ENCODE measurements at regions of chr18 and their contacts with region 1.

Region 1: DNA sequence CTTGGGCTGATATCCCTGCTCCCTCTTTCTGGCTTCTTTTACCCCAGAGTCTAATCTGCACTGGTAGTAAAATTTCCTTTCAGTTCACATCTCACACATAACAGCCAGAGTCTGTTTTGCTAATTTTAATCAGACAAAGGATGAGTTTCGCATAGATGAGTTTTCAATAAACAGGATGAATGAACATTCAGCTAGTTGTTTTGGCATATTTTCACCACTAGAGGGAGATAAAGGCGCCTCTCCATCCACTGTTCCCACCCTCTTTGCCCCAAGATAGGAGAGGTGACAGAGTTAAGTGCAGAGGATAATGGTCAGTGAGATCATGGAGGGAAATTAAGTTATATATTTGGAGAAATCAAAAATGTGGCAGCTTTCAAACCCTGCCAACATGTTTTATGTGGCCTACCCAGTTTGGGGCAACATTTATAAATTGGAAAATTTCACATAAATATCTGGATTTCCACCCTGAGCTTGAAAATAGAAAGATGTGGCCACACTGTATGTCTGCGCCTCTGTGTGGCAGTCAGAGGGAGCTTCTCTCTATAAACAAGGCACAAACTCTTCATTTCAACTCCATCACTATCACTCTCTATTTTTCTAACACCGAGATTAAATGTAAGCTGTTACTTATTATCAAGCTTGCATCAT is 48.5 kb upstream of the DTNA start:
- DNase-seq: no peak
- ATAC-seq: no peak

Region 2: GRCh38 chr18:34707670-34708069 is 46.1 kb after region 1 on chr18:
- intact Hi-C with region 1: loop called (anchors 2 kb)
- DNase-seq: no peak
- ATAC-seq: peak; percentile 38

Region 3: GRCh38 chr18:34742891-34743341 is 81.3 kb after region 1 on chr18:
- intact Hi-C with region 1: no loop called
- DNase-seq: no peak
- ATAC-seq: no peak

Measured in Right ventricle myocardium inferior (tissue), 1 donor.